ENCODE measurements at regions of chr7 and their contacts with region 1.

Region 1: GRCh38 chr7:156232931-156233705 is 407.5 kb upstream of the RNF32 start:
- DNase-seq: no peak
- H3K4me3 ChIP-seq: no peak overlapping the region
- H3K27ac ChIP-seq: no peak overlapping the region
- H3K4me1 ChIP-seq: no peaks in the 10 kb centered on the region
- H3K27me3 ChIP-seq: no peaks in the 10 kb centered on the region
- CTCF ChIP-seq: no peak

Region 2: GRCh38 chr7:156460858-156461627 is 227.9 kb after region 1 on chr7:
- CTCF ChIA-PET with region 1: no interaction called
- dilution Hi-C with region 1: no loop called
- in situ Hi-C with region 1: no loop called
- intact Hi-C with region 1: no loop called
- DNase-seq: no peak
- H3K4me3 ChIP-seq: no peak overlapping the region
- H3K27ac ChIP-seq: no peak overlapping the region
- H3K4me1 ChIP-seq: no peaks in the 10 kb centered on the region
- H3K27me3 ChIP-seq: no peaks in the 10 kb centered on the region
- CTCF ChIP-seq: no peak

Region 3: GRCh38 chr7:156903232-156903909 is 670.3 kb after region 1 on chr7:
- CTCF ChIA-PET with region 1: interaction called, 15 read pairs
- dilution Hi-C with region 1: no loop called
- in situ Hi-C with region 1: no loop called
- intact Hi-C with region 1: no loop called
- DNase-seq: peak; percentile 79
- H3K4me3 ChIP-seq: no peak overlapping the region
- H3K27ac ChIP-seq: no peak overlapping the region
- H3K4me1 ChIP-seq: peaks cover 23% of the 10 kb centered on the region
- H3K27me3 ChIP-seq: no peaks in the 10 kb centered on the region
- CTCF ChIP-seq: no peak